ENCODE measurements at regions of chr11 and their contacts with region 1.

Region 1: GRCh38 chr11:9314291-9315036 is at the start of gene TMEM41B:
- DNase-seq: peak; percentile 98 to 99 (median 99)
- H3K4me3 ChIP-seq: peak within 1 kb of the TSS; percentile 48 to 82
- H3K4me3 Mint-ChIP-seq: peak within 1 kb of the TSS; percentile 93 to 100 (median 97)
- H3K27ac ChIP-seq: peak within 1 kb of the TSS; percentile 61
- H3K27ac Mint-ChIP-seq: peak within 1 kb of the TSS; percentile 95 to 99 (median 97)
- H3K4me1 ChIP-seq: peaks cover 34% of the 10 kb centered on the region
- H3K4me1 Mint-ChIP-seq: peaks cover 27 to 48% (median 37%) of the 10 kb centered on the region in 4 donors
- H3K27me3 ChIP-seq: no peaks in the 10 kb centered on the region
- H3K27me3 Mint-ChIP-seq: peaks cover 3 to 10% of the 10 kb centered on the region in 2 donors
- total RNA-seq, gene TMEM41B: 53.3 to 54.7 TPM

Region 2: DNA sequence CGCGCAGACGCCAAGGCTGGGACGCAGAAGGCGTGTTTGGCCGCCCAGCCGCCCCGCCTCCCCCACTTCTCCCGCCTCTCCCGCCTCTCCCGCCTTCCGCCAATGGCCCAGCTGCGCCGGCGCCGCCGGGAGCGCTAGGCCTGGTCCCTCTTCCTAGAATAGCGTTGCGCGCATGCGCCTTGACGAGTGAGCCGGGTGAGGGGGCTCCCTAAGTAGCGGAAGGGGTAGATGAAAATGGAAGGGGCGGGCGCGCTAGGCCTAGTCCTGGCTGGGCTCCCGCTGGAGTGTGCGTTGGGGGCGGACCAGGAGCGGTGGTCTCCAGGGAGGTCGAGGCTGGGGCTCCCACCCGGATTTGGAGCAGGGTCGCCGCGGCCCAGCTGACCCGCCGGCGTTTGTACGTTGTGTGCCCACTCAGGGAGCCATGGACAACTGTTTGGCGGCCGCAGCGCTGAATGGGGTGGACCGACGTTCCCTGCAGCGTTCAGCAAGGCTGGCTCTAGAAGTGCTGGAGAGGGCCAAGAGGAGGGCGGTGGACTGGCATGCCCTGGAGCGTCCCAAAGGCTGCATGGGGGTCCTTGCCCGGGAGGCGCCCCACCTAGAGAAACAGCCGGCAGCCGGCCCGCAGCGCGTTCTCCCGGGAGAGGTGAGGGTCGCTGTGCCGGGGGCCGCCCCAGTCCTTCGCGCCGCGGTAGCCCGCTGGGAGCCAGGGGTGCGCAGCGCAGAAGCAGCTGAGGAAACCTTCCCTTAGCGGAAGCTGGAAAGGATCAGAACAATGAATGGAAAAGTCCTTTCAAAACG is 403.2 kb before region 1 on chr11 and contains the start of gene AKIP1:
- CTCF ChIA-PET with region 1: no interaction called
- POLR2A ChIA-PET with region 1: no interaction called
- intact Hi-C with region 1: loop called (anchors 5 kb)
- DNase-seq: peak; percentile 63 to 78 (median 65)
- H3K4me3 ChIP-seq: peak within 1 kb of the TSS; percentile 76 to 79
- H3K4me3 Mint-ChIP-seq: peak within 1 kb of the TSS; percentile 91 to 97 (median 92)
- H3K27ac ChIP-seq: peak within 1 kb of the TSS; percentile 52
- H3K27ac Mint-ChIP-seq: peak within 1 kb of the TSS; percentile 57 to 94 (median 89)
- H3K4me1 ChIP-seq: peaks cover 38% of the 10 kb centered on the region
- H3K4me1 Mint-ChIP-seq: peaks cover 27 to 60% (median 41%) of the 10 kb centered on the region in 4 donors
- H3K27me3 ChIP-seq: no peaks in the 10 kb centered on the region
- H3K27me3 Mint-ChIP-seq: no peaks in the 10 kb centered on the region
- total RNA-seq, gene AKIP1: 13.3 to 14.5 TPM

Region 3: GRCh38 chr11:9003573-9004309 is 310.7 kb before region 1 on chr11 and contains the start of gene NRIP3:
- CTCF ChIA-PET with region 1: no interaction called
- POLR2A ChIA-PET with region 1: no interaction called
- intact Hi-C with region 1: loop called (anchors 5 kb)
- DNase-seq: peak; percentile 79 to 88 (median 82)
- H3K4me3 ChIP-seq: peak within 1 kb of the TSS; percentile 30 to 41
- H3K4me3 Mint-ChIP-seq: peak within 1 kb of the TSS; percentile 79 to 91 (median 86)
- H3K27ac ChIP-seq: no peak within 1 kb of the TSS
- H3K27ac Mint-ChIP-seq: peak within 1 kb of the TSS; percentile 57 to 87 (median 79)
- H3K4me1 ChIP-seq: peaks cover 16% of the 10 kb centered on the region
- H3K4me1 Mint-ChIP-seq: peaks cover 12 to 28% (median 18%) of the 10 kb centered on the region in 4 donors
- H3K27me3 ChIP-seq: peaks cover 19% of the 10 kb centered on the region
- H3K27me3 Mint-ChIP-seq: peaks cover 11 to 22% of the 10 kb centered on the region in 2 donors
- total RNA-seq, gene NRIP3: 1.5 to 1.7 TPM

Region 4: GRCh38 chr11:9265211-9266131 is 49.0 kb before region 1 on chr11 and contains the start of gene DENND5A:
- CTCF ChIA-PET with region 1: interaction called, 3 read pairs
- POLR2A ChIA-PET with region 1: interaction called, 10 read pairs
- intact Hi-C with region 1: loop called (anchors 2 kb)
- DNase-seq: peak; percentile 32 to 51 (median 35)
- H3K4me3 ChIP-seq: peak within 1 kb of the TSS; percentile 68 to 76
- H3K4me3 Mint-ChIP-seq: peak within 1 kb of the TSS; percentile 90 to 99 (median 97)
- H3K27ac ChIP-seq: peak within 1 kb of the TSS; percentile 48
- H3K27ac Mint-ChIP-seq: peak within 1 kb of the TSS; percentile 92 to 97 (median 95)
- H3K4me1 ChIP-seq: peaks cover 33% of the 10 kb centered on the region
- H3K4me1 Mint-ChIP-seq: peaks cover 25 to 39% (median 31%) of the 10 kb centered on the region in 4 donors
- H3K27me3 ChIP-seq: no peaks in the 10 kb centered on the region
- H3K27me3 Mint-ChIP-seq: peaks cover 0 to 2% of the 10 kb centered on the region in 2 donors
- total RNA-seq, gene DENND5A: 58.6 to 61.9 TPM

Region 5: GRCh38 chr11:9363954-9364912 is 49.8 kb after region 1 on chr11:
- CTCF ChIA-PET with region 1: interaction called, 4 read pairs
- POLR2A ChIA-PET with region 1: interaction called, 31 read pairs
- intact Hi-C with region 1: loop called (anchors 1 kb)
- DNase-seq: peak; percentile 66 to 85 (median 78)
- H3K4me3 ChIP-seq: peak overlapping the region; percentile 62 to 96
- H3K4me3 Mint-ChIP-seq: peak overlapping the region; percentile 82 to 89 (median 88)
- H3K27ac ChIP-seq: peak overlapping the region; percentile 84
- H3K27ac Mint-ChIP-seq: peak overlapping the region; percentile 89 to 97 (median 92)
- H3K4me1 ChIP-seq: peaks cover 10% of the 10 kb centered on the region
- H3K4me1 Mint-ChIP-seq: peaks cover 11 to 13% (median 12%) of the 10 kb centered on the region in 4 donors
- H3K27me3 ChIP-seq: no peaks in the 10 kb centered on the region
- H3K27me3 Mint-ChIP-seq: no peaks in the 10 kb centered on the region

Region 6: DNA sequence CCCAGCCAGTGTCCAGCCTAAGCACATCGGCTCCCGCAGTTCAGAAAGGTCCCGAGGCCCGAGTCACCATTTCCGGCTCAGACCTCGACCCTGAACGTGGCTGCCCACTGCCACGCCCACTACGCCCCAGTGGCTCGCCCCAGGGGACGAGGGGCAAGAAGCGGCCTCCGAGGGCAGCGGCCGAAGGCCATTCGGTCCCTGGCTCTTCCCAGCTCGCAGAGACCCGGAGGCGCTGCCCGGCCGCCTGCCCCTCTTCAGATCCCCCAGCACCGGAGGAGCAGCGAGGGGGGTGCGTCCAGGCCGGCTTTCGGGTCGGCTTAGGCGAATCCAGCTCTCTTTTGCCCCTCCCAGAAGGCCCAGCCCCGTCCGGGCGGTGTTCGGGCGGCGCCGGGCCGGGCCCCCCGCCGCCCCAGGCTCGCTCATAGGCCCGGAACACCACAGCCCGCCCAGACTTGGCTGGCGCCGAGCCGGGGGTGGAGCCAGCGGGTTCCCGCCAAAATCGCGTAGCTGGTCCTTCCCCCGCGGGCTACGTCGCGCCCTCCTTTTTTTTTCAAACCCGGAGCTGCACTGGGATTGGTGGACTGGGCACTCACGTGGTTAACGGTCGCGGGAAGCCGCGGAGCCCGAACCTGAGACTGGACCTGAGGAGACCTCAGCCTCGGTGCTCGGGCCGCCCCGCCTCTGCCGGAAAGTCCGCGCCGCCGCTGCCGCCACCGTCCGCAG is 258.7 kb after region 1 on chr11 and contains the start of gene WEE1:
- CTCF ChIA-PET with region 1: no interaction called
- POLR2A ChIA-PET with region 1: interaction called, 4 read pairs
- intact Hi-C with region 1: loop called (anchors 1 kb)
- DNase-seq: peak; percentile 94 to 96 (median 95)
- H3K4me3 ChIP-seq: peak within 1 kb of the TSS; percentile 42 to 80
- H3K4me3 Mint-ChIP-seq: peak within 1 kb of the TSS; percentile 85 to 93 (median 89)
- H3K27ac ChIP-seq: peak within 1 kb of the TSS; percentile 86
- H3K27ac Mint-ChIP-seq: peak within 1 kb of the TSS; percentile 85 to 95 (median 92)
- H3K4me1 ChIP-seq: peaks cover 55% of the 10 kb centered on the region
- H3K4me1 Mint-ChIP-seq: peaks cover 24 to 56% (median 39%) of the 10 kb centered on the region in 4 donors
- H3K27me3 ChIP-seq: no peaks in the 10 kb centered on the region
- H3K27me3 Mint-ChIP-seq: no peaks in the 10 kb centered on the region
- total RNA-seq, gene WEE1: 11.1 to 11.7 TPM

Region 7: DNA sequence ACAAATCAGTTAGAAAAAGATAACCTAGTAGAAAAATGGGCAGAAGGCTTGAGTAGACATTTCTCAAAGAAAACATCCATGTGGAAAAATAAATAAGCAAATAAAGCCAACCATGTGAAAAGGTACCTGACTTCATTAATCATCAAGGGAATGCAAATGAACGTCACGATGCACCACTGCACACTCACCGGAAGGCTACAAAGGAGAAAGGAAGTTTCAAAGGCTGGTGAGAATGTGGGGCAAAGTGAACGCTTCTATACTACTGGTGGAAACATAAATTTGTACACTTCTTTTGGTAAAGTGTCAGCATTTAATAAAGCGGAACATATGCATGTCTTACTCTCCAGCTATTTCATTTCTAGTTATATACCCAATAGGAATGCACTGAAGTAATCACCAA is 1871.8 kb after region 1 on chr11:
- CTCF ChIA-PET with region 1: no interaction called
- POLR2A ChIA-PET with region 1: no interaction called
- intact Hi-C with region 1: no loop called
- DNase-seq: no peak
- H3K4me3 ChIP-seq: no peak overlapping the region
- H3K4me3 Mint-ChIP-seq: no peak overlapping the region
- H3K27ac ChIP-seq: no peak overlapping the region
- H3K27ac Mint-ChIP-seq: no peak overlapping the region
- H3K4me1 ChIP-seq: no peaks in the 10 kb centered on the region
- H3K4me1 Mint-ChIP-seq: no peaks in the 10 kb centered on the region
- H3K27me3 ChIP-seq: no peaks in the 10 kb centered on the region
- H3K27me3 Mint-ChIP-seq: peaks cover 7 to 10% of the 10 kb centered on the region in 2 donors

Measured in CD4-positive, alpha-beta memory T cell (primary cell).